Activated CD4-positive, alpha-beta T cell treated with anti-CD3 and anti-CD28 coated beads for 36 hours (primary cell): ENCODE measurements at regions of chr22 and their contacts with region 1.

Region 1: DNA sequence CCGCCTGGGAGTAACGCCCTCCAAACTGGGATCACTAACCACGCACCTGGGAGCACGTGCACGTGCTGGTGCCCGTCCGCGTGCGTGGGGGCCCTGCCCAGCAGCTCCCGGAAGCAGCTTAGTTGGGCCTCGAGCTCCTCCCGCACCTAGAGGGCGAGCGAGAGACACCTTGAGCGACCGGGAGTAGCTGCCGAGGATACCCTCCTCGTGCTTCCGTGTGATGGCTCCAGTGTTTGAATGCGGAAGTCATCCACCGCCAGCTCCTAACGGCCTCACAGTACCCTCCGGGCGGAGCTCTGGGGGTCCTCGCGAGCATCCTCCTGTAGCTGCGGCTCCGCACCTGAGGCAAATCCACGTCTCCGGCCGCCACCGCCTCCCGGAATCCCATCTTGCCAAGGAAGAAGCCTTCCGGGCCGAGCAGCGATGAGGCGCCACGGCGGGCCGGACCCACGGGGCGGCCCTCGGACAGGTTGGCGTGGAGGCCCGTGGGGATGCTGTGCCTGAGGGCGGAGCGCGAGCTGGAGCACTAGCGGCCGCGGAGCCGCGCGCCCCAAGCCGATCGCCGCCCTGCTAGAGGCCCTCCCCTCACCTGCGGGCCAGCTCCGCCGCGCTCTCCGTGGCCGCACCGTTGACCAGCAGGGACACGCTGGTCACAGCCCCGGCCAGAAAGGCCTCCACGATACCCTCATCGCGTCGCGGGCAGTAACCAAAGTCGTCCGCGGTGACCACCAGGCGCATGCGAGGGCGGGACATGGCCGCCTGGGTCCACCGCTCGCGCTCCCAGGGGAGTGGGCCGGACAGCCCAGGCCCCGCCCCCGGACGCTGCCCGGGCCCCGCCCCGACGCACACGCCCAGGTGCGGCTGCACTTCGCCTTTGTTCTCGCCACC is at the start of gene YDJC:
- DNase-seq: peak; percentile 98
- ATAC-seq: peak; percentile 88
- H3K4me3 Mint-ChIP-seq: peak within 1 kb of the TSS; percentile 83
- H3K27ac Mint-ChIP-seq: peak within 1 kb of the TSS; percentile 93
- H3K4me1 Mint-ChIP-seq: peaks cover 34% of the 10 kb centered on the region
- H3K27me3 Mint-ChIP-seq: no peaks in the 10 kb centered on the region
- total RNA-seq, gene YDJC: 43.4 to 54.0 TPM

Region 2: GRCh38 chr22:20858615-20859416 is 770.7 kb before region 1 on chr22 and contains the starts of genes PI4KA and SNAP29:
- CTCF ChIA-PET with region 1: no interaction called
- POLR2A ChIA-PET with region 1: no interaction called
- intact Hi-C with region 1: loop called in 1 of 2 experiments (anchors 1 kb)
- DNase-seq: peak; percentile 99
- ATAC-seq: peak; percentile 95
- H3K4me3 Mint-ChIP-seq: peak within 1 kb of the TSS; percentile 87
- H3K27ac Mint-ChIP-seq: peak within 1 kb of the TSS; percentile 79
- H3K4me1 Mint-ChIP-seq: peaks cover 46% of the 10 kb centered on the region
- H3K27me3 Mint-ChIP-seq: no peaks in the 10 kb centered on the region
- total RNA-seq, gene PI4KA: 52.8 TPM
- total RNA-seq, gene SNAP29: 22.8 to 33.8 TPM

Region 3: DNA sequence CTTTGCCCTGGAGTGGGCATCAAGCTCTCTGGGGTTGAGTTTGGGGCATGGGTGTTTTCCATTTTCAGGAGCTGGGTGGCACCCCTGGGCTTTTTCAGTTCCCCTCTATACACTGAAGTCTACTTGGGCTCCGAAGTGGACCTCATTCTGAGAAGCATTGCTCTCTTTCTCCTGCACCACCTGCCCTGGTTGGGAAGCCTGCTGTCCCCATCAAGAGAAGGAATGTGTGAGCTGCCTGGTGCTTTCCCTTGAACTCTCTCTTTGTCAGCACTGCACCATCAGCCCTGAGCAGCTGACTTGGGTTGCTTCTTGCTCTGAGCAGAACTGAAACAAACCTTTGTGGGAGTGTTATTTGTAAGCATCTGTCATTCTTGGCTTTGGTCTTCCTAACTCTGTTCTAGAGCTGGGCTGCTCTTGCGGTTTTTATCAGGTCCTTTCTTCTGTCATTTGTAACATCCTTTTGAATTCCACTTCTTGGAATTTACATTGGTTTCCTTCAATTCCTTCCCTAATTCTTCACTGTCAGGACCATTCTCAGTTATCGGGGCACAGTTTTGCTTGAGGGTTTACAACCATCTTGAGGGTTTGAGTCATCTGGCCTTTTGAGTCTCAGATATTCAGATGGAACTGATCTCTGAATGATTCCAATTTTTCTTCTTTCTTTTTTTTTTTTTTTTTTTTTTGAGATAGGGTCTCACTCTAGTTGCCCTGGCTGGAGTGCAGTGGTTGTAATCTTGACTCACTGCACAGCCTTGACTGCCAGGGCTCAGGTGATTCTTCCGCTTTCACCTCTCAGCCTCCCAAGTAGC is 41.5 kb before region 1 on chr22:
- CTCF ChIA-PET with region 1: interaction called, 6 read pairs
- POLR2A ChIA-PET with region 1: interaction called, 5 read pairs
- intact Hi-C with region 1: loop called (anchors 1 to 5 kb)
- DNase-seq: peak; percentile 79
- ATAC-seq: peak; percentile 97
- H3K4me3 Mint-ChIP-seq: peak overlapping the region; percentile 12
- H3K27ac Mint-ChIP-seq: peak overlapping the region; percentile 88
- H3K4me1 Mint-ChIP-seq: peaks cover 69% of the 10 kb centered on the region
- H3K27me3 Mint-ChIP-seq: no peaks in the 10 kb centered on the region

Region 4: GRCh38 chr22:21641789-21642583 is 12.5 kb after region 1 on chr22 and contains the start of gene SDF2L1:
- CTCF ChIA-PET with region 1: interaction called, 209 read pairs
- POLR2A ChIA-PET with region 1: interaction called, 36 read pairs
- intact Hi-C with region 1: loop called (anchors 1 kb)
- DNase-seq: peak; percentile 99
- ATAC-seq: peak; percentile 99
- H3K4me3 Mint-ChIP-seq: peak within 1 kb of the TSS; percentile 85
- H3K27ac Mint-ChIP-seq: peak within 1 kb of the TSS; percentile 80
- H3K4me1 Mint-ChIP-seq: peaks cover 30% of the 10 kb centered on the region
- H3K27me3 Mint-ChIP-seq: peaks cover 2% of the 10 kb centered on the region
- total RNA-seq, gene SDF2L1: 13.7 to 32.8 TPM

Region 5: GRCh38 chr22:21657361-21658032 is 28.0 kb after region 1 on chr22:
- CTCF ChIA-PET with region 1: interaction called, 5 read pairs
- POLR2A ChIA-PET with region 1: no interaction called
- intact Hi-C with region 1: loop called in 1 of 2 experiments (anchors 1 kb)
- DNase-seq: peak; percentile 88
- ATAC-seq: peak; percentile 92
- H3K4me3 Mint-ChIP-seq: peak overlapping the region; percentile 76
- H3K27ac Mint-ChIP-seq: peak overlapping the region; percentile 31
- H3K4me1 Mint-ChIP-seq: peaks cover 13% of the 10 kb centered on the region
- H3K27me3 Mint-ChIP-seq: no peaks in the 10 kb centered on the region

Region 6: GRCh38 chr22:21735200-21736076 is 105.9 kb after region 1 on chr22 and contains the start of gene YPEL1:
- CTCF ChIA-PET with region 1: no interaction called
- POLR2A ChIA-PET with region 1: no interaction called
- intact Hi-C with region 1: loop called in 1 of 2 experiments (anchors 1 kb)
- DNase-seq: peak; percentile 96
- ATAC-seq: peak; percentile 95
- H3K4me3 Mint-ChIP-seq: peak within 1 kb of the TSS; percentile 84
- H3K27ac Mint-ChIP-seq: peak within 1 kb of the TSS; percentile 79
- H3K4me1 Mint-ChIP-seq: peaks cover 10% of the 10 kb centered on the region
- H3K27me3 Mint-ChIP-seq: peaks cover 3% of the 10 kb centered on the region
- total RNA-seq, gene YPEL1: 1.0 to 1.5 TPM